WTC11 (cell line): ENCODE measurements at regions of chr1 and their contacts with region 1.

Region 1: GRCh38 chr1:31394628-31395193 is 18.3 kb upstream of the SERINC2 start:
- DNase-seq: peak; percentile 96
- ATAC-seq: peak; percentile 95
- H3K4me3 Mint-ChIP-seq: peak overlapping the region; percentile 63
- H3K27ac Mint-ChIP-seq: no peak overlapping the region
- H3K4me1 Mint-ChIP-seq: peaks cover 19% of the 10 kb centered on the region
- H3K27me3 Mint-ChIP-seq: peaks cover 9% of the 10 kb centered on the region
- CTCF ChIP-seq: peak; percentile 72

Region 2: DNA sequence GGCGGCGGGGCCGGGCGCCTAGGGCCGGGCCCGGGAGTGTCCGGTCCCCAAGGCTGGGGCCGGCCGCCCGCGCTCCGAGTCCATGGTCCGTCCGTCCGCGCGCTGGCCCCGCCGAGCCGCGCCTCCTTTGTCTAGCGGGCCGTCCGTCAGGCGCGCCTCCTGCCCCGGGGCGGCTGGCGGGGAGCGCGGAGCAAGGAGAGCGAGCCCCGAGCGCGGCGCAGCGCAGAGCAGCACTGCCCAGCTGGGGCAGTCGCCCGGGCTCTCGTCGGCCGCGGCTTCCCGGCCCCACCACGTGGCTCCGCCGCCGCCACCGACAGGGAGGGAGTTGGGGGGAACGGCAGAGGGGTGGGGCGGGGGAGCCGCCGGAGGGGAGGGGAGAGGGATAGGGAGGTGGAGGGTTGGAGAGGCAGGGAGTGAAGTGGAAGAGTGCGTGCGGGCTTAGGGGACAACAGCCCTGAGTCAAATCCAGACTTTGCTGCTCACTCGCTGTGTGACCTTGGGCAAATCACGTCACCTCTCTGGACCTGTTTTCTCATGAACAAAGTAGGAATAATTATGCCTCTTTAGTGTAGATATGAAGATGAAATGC is 155.0 kb before region 1 on chr1 and contains the start of gene NKAIN1:
- CTCF ChIA-PET with region 1: no interaction called
- POLR2A ChIA-PET with region 1: no interaction called
- DNase-seq: peak; percentile 67
- ATAC-seq: peak; percentile 75
- H3K4me3 Mint-ChIP-seq: peak within 1 kb of the TSS; percentile 75
- H3K27ac Mint-ChIP-seq: no peak within 1 kb of the TSS
- H3K4me1 Mint-ChIP-seq: peaks cover 17% of the 10 kb centered on the region
- H3K27me3 Mint-ChIP-seq: peaks cover 26% of the 10 kb centered on the region
- CTCF ChIP-seq: no peak
- total RNA-seq, gene NKAIN1: 34.0 to 36.8 TPM (median 35.3 TPM) in 3 replicates

Region 3: GRCh38 chr1:31327381-31327780 is 67.3 kb before region 1 on chr1:
- CTCF ChIA-PET with region 1: no interaction called
- POLR2A ChIA-PET with region 1: no interaction called
- DNase-seq: no peak
- ATAC-seq: no peak; the same call in 1 of the 2 replicates
- H3K4me3 Mint-ChIP-seq: no peak overlapping the region
- H3K27ac Mint-ChIP-seq: no peak overlapping the region
- H3K4me1 Mint-ChIP-seq: no peaks in the 10 kb centered on the region
- H3K27me3 Mint-ChIP-seq: no peaks in the 10 kb centered on the region
- CTCF ChIP-seq: no peak

Region 4: DNA sequence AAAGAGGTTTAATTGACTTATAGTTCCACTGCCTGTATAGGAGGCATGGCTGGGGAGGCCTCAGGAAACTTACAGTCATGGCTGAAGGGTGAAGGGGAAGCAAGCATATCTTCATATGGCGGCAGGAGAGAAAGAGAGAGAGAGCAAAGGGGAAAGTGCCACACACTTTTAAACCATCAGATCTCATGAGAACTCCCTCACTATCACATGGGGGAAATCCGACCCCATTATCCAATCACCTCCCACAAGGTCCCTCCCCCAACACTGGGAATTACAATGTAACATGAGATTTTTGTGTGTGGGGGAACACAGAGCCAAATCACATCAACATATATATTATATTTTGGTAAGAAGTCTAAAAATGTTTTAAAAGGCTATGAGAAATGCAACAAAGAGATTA is 49.1 kb before region 1 on chr1:
- CTCF ChIA-PET with region 1: no interaction called
- POLR2A ChIA-PET with region 1: no interaction called
- DNase-seq: no peak
- ATAC-seq: peak; percentile 34; the same call in 1 of the 2 replicates
- H3K4me3 Mint-ChIP-seq: no peak overlapping the region
- H3K27ac Mint-ChIP-seq: peak overlapping the region; percentile 44; the same call in 1 of the 2 replicates
- H3K4me1 Mint-ChIP-seq: peaks cover 6% of the 10 kb centered on the region; the same call in 1 of the 2 replicates
- H3K27me3 Mint-ChIP-seq: no peaks in the 10 kb centered on the region
- CTCF ChIP-seq: no peak

Region 5: GRCh38 chr1:31383967-31384366 is 10.7 kb before region 1 on chr1:
- CTCF ChIA-PET with region 1: interaction called, 27 read pairs
- POLR2A ChIA-PET with region 1: no interaction called
- DNase-seq: no peak
- ATAC-seq: no peak
- H3K4me3 Mint-ChIP-seq: no peak overlapping the region
- H3K27ac Mint-ChIP-seq: no peak overlapping the region
- H3K4me1 Mint-ChIP-seq: peaks cover 10% of the 10 kb centered on the region
- H3K27me3 Mint-ChIP-seq: peaks cover 3% of the 10 kb centered on the region
- CTCF ChIP-seq: no peak

Region 6: DNA sequence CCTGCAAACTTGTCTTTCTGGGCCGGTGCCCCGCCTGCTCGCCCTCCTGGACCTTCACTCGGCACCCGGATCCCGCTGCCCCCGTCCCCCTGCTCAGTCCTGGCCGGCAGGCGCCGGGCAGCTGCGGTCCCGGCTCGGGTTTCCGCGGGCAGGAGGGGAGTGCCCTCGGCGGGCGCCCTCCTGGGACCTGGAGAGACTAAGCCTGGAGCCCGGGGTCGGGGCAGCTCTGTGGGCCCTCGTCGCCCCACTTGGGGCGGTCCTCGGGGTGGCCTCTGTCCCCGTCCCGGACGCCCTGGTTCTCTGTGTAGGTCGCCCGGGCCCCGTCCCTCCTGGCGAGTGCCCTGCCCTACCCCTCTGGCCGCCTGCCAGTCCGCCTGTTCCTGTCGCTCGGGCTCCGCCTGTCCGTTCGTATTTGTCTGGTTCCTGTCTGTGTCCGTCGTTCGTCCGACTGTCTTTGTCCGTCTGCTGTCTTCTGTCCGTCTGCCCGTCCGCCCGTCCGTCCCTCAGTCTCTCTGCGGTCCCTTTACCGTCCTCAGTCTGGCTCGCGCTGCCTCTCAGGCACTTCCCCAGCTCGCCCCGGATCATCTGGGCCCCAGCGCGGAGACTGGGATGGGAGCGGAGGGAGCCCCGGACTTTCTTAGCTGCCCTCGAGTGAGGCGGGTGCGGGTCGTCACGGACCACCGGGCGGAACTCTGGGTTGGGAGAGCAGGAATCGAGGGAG is 18.9 kb after region 1 on chr1:
- CTCF ChIA-PET with region 1: interaction called, 225 read pairs
- POLR2A ChIA-PET with region 1: interaction called, 8 read pairs
- DNase-seq: peak; percentile 55
- ATAC-seq: peak; percentile 25
- H3K4me3 Mint-ChIP-seq: peak overlapping the region; percentile 95
- H3K27ac Mint-ChIP-seq: 0 out of 2 replicates have a peak overlapping the region, but pooled peaks have one; percentile 47
- H3K4me1 Mint-ChIP-seq: peaks cover 37% of the 10 kb centered on the region
- H3K27me3 Mint-ChIP-seq: peaks cover 16% of the 10 kb centered on the region
- CTCF ChIP-seq: no peak